Activated CD4-positive, alpha-beta T cell treated with anti-CD3 and anti-CD28 coated beads for 36 hours (primary cell): ENCODE measurements at regions of chr11 and their contacts with region 1.

Region 1: DNA sequence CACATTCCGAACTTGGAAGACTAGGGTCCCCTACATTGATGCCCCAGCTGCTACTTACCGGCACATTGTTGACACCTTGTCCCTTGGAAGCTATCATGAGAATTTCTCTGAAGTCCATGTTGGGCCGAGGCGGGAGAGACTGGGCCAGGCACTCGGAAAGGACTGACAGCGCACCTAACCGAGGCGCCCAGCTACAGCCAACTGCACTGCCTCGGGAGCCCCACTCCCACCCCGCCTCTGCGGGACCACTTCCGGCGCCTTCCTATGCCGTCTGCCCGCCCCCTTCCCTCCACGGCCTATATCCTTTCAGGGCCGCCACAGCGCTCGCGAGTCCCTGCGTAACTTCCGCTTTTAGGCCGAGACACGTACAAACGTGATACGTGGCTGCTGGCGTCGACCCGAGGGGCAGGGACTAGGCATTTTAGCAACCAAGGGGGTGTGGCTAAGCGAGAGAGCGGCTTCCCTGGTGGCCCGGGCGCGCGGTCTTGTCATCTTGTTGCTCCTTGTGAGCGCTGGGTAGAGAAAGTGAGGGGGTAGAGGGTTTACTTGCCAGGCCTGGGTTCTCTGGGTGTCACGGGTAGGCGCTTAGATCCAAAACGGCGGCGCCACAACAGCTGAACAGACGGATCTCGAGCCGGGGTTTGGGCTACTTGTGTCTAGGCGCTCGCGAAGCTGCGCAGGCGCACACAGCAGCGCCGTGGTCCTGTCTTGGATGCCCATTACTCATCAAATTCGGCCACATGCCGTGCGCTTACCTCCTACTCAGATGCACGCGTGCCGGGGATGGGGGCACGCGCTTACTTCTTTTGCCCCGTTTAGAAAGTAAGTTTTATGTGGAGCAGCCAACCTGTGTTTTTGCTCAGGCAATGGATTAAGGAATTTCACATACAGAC is at the start of gene SPTY2D1:
- DNase-seq: peak; percentile 99
- ATAC-seq: peak; percentile 98
- H3K4me3 Mint-ChIP-seq: peak within 1 kb of the TSS; percentile 83
- H3K27ac Mint-ChIP-seq: peak within 1 kb of the TSS; percentile 95
- H3K4me1 Mint-ChIP-seq: peaks cover 21% of the 10 kb centered on the region
- H3K27me3 Mint-ChIP-seq: no peaks in the 10 kb centered on the region
- total RNA-seq, gene SPTY2D1: 17.8 to 26.4 TPM

Region 2: DNA sequence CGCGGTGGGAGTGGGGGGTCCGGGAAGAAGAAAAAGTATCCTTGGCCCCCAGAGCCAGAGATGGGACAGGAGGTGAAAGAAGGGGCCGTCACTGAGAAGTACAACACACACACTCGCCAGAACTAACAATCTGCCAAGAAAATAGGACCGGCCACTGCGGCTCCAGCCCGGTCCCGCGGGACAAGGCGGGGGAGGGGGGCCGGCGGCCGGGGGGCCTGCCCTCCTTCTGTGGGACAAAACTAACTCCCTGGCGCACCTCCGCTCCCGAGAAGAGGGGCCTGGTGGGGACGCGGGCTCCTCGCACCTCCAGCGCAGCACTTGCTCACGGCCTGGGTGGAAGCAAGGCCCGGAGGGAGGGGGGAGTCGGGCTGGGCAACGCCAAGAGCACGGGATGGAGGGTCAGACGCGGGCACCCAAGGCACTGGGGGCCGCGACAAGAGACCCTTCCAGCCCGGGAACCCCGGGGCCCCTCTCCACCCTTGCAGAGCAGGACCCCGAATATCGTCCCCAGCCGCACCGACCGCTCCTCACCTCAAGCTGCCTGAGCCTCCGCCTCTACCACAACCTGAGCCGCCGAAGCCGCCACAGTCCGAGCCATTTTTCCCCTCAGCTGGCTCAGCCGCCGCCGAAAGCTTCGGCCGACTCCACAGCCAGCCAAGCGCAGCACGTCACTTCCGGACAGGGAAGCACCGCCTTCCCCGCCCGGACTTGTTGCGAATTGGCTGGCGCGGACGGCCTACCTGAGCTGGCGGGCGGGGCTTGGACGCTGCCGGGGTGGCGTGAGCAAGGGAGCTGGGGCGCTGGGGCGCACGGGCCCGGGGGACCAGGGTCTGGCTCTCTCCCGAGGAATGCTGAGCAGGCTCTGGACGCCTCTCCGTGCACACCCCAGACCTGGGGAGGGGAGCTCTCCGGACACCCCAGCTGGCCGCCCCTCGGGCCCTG is 1426.8 kb before region 1 on chr11 and contains the start of gene PIK3C2A:
- CTCF ChIA-PET with region 1: no interaction called
- POLR2A ChIA-PET with region 1: no interaction called
- intact Hi-C with region 1: loop called in 1 of 2 experiments (anchors 2 kb)
- DNase-seq: peak; percentile 97
- ATAC-seq: peak; percentile 97
- H3K4me3 Mint-ChIP-seq: peak within 1 kb of the TSS; percentile 91
- H3K27ac Mint-ChIP-seq: peak within 1 kb of the TSS; percentile 97
- H3K4me1 Mint-ChIP-seq: peaks cover 40% of the 10 kb centered on the region
- H3K27me3 Mint-ChIP-seq: no peaks in the 10 kb centered on the region
- total RNA-seq, gene PIK3C2A: 23.3 to 27.3 TPM

Region 3: DNA sequence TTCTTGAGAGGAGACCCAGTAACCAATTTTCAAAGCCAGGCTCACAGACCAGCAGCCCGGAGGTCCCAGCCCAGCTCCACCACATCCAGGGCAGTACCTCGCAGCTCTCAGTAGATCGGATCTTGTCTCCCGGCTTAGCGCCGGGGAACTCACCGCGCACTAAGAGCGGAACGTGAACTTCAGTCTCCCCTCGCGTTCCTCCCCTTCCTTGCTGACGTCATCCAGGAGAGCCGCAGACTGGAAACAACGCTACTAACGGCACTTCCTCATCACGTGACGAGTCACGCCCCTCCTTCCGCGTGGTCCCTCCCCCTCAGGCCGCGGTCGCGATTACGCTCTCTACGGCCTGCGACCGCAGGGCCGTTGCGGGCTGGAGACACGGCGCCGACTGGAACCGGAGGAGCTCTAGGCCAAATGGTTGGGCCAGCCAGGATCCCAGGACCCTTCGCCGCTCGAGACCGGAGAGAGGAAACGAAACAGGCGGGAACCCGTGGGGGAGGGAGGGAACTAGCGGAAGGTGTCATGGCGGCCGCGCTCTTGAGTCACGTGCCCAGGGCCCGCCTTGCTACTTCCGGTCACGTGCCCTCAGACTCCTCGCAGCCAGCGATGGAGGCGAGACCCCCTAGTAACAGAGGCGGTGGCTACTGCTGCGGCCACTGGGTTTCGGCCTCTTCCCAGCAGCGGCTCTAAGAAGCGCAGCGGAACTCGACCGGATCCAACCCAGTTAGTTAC is 312.2 kb before region 1 on chr11 and contains the starts of genes GTF2H1 and HPS5:
- CTCF ChIA-PET with region 1: no interaction called
- POLR2A ChIA-PET with region 1: interaction called, 3 read pairs
- intact Hi-C with region 1: loop called (anchors 1 kb)
- DNase-seq: peak; percentile 97
- ATAC-seq: peak; percentile 89
- H3K4me3 Mint-ChIP-seq: peak within 1 kb of the TSS; percentile 92
- H3K27ac Mint-ChIP-seq: peak within 1 kb of the TSS; percentile 100
- H3K4me1 Mint-ChIP-seq: peaks cover 59% of the 10 kb centered on the region
- H3K27me3 Mint-ChIP-seq: no peaks in the 10 kb centered on the region
- total RNA-seq, gene GTF2H1: 48.2 to 57.9 TPM
- total RNA-seq, gene HPS5: 14.3 to 16.1 TPM

Region 4: DNA sequence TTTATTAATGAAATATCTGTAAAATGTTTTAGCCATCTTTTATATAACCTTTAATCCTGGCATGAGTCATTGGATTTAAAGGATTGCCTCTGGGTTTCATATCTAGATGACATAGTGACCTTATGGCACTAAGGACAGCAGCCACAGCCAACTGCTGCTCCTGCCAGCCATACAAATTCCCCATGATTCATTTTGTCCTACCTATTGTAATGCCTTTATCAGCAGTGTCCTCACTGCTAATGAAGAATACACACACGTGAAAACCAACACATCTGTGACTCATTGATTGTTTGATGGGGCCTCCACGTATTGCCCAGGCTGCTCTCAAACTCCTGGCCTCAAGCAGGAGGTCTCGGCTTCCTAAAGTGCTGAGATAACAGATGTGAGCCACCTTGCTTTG is 177.0 kb before region 1 on chr11:
- CTCF ChIA-PET with region 1: no interaction called
- POLR2A ChIA-PET with region 1: no interaction called
- intact Hi-C with region 1: no loop called
- DNase-seq: no peak
- ATAC-seq: peak; percentile 26
- H3K4me3 Mint-ChIP-seq: no peak overlapping the region
- H3K27ac Mint-ChIP-seq: no peak overlapping the region
- H3K4me1 Mint-ChIP-seq: peaks cover 2% of the 10 kb centered on the region
- H3K27me3 Mint-ChIP-seq: peaks cover 4% of the 10 kb centered on the region

Region 5: DNA sequence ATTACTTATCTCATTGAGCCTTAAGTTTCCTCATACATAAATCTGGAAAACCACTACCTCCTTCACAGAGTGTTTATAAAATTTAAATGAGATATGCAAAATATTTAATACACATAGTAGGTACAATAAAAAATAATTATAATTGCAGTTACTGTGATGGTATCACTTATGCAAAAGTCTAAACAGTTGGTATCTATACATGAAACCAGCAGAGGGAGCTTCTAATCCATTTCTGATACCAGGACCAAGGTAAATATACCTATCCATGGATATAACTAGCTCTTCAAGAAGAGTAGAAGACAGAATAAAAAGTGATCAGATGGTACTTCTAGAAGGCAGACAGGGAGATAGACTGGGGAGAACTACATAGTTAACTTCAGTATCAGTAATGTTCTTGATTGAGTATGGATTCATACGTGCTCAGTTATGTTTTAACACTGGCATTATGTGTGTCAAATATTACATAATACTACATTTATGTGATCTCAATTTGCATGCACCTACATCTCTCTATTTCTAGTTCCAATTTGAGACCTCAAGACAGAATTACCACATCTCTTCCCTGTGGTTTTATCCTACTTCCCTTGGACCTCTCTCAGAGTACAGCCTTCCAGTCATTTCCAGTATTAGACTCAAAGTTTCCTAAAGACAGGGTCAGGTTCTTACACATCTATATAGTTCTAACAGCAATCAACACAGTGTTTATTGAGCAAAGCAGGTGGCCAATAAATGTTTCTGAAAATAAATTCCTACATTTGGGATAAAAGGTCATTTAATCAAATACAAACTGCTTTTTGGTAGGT is 94.0 kb before region 1 on chr11:
- CTCF ChIA-PET with region 1: interaction called, 5 read pairs
- POLR2A ChIA-PET with region 1: interaction called, 3 read pairs
- intact Hi-C with region 1: loop called in 1 of 2 experiments (anchors 5 kb)
- DNase-seq: no peak
- ATAC-seq: peak; percentile 76
- H3K4me3 Mint-ChIP-seq: no peak overlapping the region
- H3K27ac Mint-ChIP-seq: no peak overlapping the region
- H3K4me1 Mint-ChIP-seq: peaks cover 6% of the 10 kb centered on the region
- H3K27me3 Mint-ChIP-seq: no peaks in the 10 kb centered on the region

Region 6: GRCh38 chr11:18650859-18651557 is 16.6 kb after region 1 on chr11:
- CTCF ChIA-PET with region 1: interaction called, 13 read pairs
- POLR2A ChIA-PET with region 1: no interaction called
- intact Hi-C with region 1: no loop called
- DNase-seq: peak; percentile 66
- ATAC-seq: peak; percentile 74
- H3K4me3 Mint-ChIP-seq: no peak overlapping the region
- H3K27ac Mint-ChIP-seq: no peak overlapping the region
- H3K4me1 Mint-ChIP-seq: no peaks in the 10 kb centered on the region
- H3K27me3 Mint-ChIP-seq: no peaks in the 10 kb centered on the region

Region 7: DNA sequence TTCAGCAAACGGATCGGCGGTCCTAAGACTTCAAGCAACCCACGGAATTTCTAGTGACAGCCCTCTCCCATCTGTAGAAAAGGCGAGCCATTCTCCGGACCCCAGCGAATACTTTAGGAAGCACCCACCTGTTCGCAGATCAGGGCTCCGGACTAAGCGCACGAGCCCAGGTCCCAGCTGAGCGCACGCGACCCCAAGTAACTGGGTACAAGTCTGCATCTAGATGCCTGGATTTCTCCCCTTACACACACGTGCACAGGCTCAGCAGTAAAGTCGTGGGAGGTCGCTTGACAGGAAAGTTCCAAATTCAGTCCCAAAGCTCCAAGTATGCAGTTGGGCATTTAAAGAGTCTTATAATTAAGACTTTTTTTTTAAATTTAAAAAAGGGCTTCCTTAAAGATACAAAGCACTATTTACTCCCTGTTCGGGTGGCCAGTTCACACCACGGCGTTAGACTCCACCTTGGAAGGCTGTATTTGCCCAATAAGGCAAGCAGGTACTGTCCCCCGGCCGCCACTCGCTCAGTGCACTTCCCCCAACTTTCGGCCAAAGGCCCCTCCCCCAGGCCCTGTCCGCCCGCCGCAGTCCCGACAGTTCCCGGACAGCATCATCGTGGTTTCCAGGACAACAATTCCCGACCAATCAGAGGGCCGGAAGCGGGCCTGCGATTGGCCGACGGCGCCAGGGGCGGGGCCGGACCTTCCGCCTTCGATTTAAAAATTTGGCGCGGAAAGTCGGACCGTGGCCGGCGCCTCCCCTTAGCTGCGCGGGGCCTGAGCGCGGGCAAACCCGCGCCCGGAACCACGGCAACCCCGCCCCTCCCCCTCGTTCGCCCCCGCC is 606.3 kb after region 1 on chr11 and contains the start of gene E2F8:
- CTCF ChIA-PET with region 1: no interaction called
- POLR2A ChIA-PET with region 1: no interaction called
- intact Hi-C with region 1: loop called in 1 of 2 experiments (anchors 2 kb)
- DNase-seq: peak; percentile 94
- ATAC-seq: peak; percentile 82
- H3K4me3 Mint-ChIP-seq: peak within 1 kb of the TSS; percentile 89
- H3K27ac Mint-ChIP-seq: peak within 1 kb of the TSS; percentile 60
- H3K4me1 Mint-ChIP-seq: peaks cover 14% of the 10 kb centered on the region
- H3K27me3 Mint-ChIP-seq: peaks cover 31% of the 10 kb centered on the region
- total RNA-seq, gene E2F8: 18.0 to 22.2 TPM